Stomach (tissue), 19 donors: ENCODE measurements at regions of chr2 and their contacts with region 1.

Region 1: GRCh38 chr2:70145816-70146733 is 44.7 kb downstream of the C2orf42 start:
- DNase-seq: no peak
- H3K4me3 ChIP-seq: no peak overlapping the region
- H3K27ac ChIP-seq: no peak overlapping the region
- H3K4me1 ChIP-seq: peaks cover 8 to 16% (median 15%) of the 10 kb centered on the region in 4 donors
- H3K27me3 ChIP-seq: no peaks in the 10 kb centered on the region
- CTCF ChIP-seq: no peak
- EP300 ChIP-seq: no peak
- POLR2A ChIP-seq: no peak

Region 2: DNA sequence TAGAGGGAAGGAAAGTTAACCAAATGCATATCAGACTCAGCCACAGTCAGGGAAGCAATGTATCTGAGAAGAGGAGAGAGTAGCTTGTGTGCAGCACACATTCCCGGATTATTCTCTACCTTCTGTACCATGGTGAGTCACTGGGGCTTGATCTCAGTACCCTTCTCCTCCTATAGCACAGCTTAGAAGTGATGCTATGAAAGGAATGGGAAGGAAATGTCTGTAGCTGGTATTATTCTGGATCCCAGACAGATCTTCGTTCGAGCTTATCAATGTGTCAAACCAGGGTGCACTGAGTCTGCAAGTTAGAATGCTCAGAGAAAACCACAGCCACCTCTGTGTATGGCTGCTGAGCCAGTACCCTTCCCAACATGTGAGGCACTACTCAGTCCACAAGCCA is 620.8 kb before region 1 on chr2:
- intact Hi-C with region 1: loop called (anchors 5 kb)
- DNase-seq: no peak
- H3K4me3 ChIP-seq: no peak overlapping the region
- H3K27ac ChIP-seq: no peak overlapping the region
- H3K4me1 ChIP-seq: no peaks in the 10 kb centered on the region
- H3K27me3 ChIP-seq: no peaks in the 10 kb centered on the region
- CTCF ChIP-seq: no peak
- EP300 ChIP-seq: no peak
- POLR2A ChIP-seq: no peak

Region 3: GRCh38 chr2:69914961-69915945 is 230.8 kb before region 1 on chr2 and contains the start of gene MXD1:
- intact Hi-C with region 1: loop called (anchors 5 kb)
- DNase-seq: peak; percentile 38 to 66
- H3K4me3 ChIP-seq: peak within 1 kb of the TSS; percentile 81 to 93 (median 86)
- H3K27ac ChIP-seq: peak within 1 kb of the TSS; percentile 95 to 99 (median 98)
- H3K4me1 ChIP-seq: peaks cover 18 to 65% (median 39%) of the 10 kb centered on the region in 4 donors
- H3K27me3 ChIP-seq: no peaks in the 10 kb centered on the region
- CTCF ChIP-seq: no peak
- EP300 ChIP-seq: no peak
- POLR2A ChIP-seq: peak in 2 of 4 donors; percentile 91 to 94
- total RNA-seq, gene MXD1: 8.1 to 40.2 (median 26.8) TPM